K562 (cell line): ENCODE measurements at regions of chr6 and their contacts with region 1.

Region 1: DNA sequence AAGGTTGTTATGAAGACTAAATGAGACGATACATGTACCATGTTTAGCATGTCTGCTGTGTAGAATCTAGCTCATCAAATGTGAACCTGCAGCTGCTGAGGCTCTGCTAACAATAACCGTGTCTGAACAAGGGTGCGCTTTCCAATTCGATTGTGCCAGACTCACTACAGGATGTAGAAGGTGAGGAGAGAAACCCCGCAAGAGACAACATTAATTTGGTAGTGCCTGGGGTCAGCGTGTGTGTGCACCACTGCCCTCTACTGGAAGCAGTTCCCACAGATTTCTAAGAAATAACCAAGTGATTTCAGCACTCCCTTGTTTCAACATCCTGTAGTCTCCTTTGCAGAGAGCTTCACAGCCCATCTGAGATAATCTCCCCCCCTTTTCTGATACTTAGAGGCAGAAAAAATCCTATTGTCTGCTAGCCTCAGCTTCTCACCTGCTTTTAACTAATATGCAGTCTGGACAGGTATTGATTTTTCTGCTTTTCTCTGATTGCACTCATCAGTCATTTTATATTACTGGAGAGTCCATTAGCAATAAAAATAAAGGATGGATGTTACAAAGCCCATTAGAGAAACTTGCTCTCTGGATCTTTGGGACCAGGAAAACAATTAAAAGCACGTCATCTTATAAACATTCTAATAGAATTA is 96.7 kb upstream of the BACH2 start:
- DNase-seq: peak; percentile 44 to 79 (median 50)
- ATAC-seq: peak; percentile 89
- H3K4me3 ChIP-seq: no peak overlapping the region
- H3K27ac ChIP-seq: no peak overlapping the region
- H3K4me1 ChIP-seq: peaks cover 7 to 14% of the 10 kb centered on the region in 2 experiments; a peak in 3 of 5 replicates
- H3K27me3 ChIP-seq: no peaks in the 10 kb centered on the region; a peak in 1 of 5 replicates
- CTCF ChIP-seq: peak; percentile 72 to 80 (median 79)
- EP300 ChIP-seq: no peak
- POLR2A ChIP-seq: no peak
- RAD21 ChIP-seq: peak; percentile 71 to 89

Region 2: DNA sequence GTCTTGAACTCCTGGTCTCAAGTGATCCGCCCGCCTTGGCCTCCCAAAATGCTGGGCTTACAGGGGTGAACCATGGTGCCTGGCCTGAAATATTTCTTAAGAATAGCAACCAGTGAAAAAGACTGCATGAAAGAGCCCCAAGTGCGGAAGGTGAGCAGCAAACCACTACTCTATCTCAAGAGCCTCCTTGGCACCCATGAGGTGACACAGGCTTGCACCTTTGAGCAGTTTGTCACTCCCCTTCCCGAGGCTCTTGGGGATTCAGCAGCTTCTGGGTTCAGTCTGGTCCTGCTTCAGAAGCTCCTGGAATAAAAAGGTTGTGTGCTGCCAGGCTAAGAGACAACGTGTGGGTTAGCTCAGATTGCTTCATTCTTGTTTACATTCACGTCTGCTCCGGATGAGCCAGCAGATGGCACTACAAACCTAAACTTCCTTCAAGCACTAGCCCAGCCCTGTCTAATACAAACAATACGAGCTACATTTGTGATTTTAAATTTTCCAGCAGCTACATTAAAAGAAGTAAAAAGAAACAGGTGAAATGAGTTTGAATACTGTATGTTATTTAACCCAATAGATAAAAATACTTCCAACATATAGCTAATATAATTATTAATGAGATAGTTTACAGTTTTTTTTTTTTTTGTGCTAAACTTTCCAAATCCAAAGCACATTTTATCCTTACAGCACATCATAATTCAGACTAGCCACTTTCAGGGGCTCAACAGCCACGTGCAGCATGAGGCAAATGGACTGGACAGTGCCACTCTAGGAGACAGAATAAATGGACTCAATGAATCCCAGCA is 452.9 kb before region 1 on chr6:
- CTCF ChIA-PET with region 1: interaction called, 10 read pairs
- POLR2A ChIA-PET with region 1: no interaction called
- in situ Hi-C with region 1: no loop called
- intact Hi-C with region 1: loop called (anchors 5 kb)
- DNase-seq: peak; percentile 54 to 79 (median 64)
- ATAC-seq: peak; percentile 99
- H3K4me3 ChIP-seq: no peak overlapping the region
- H3K27ac ChIP-seq: no peak overlapping the region
- H3K4me1 ChIP-seq: no peaks in the 10 kb centered on the region
- H3K27me3 ChIP-seq: peaks cover 0 to 13% of the 10 kb centered on the region in 2 experiments; a peak in 1 of 5 replicates
- CTCF ChIP-seq: peak; percentile 77 to 86 (median 82)
- EP300 ChIP-seq: 0 out of 2 replicates have a peak, but pooled peaks have one; percentile 16
- POLR2A ChIP-seq: no peak
- RAD21 ChIP-seq: peak; percentile 90 to 96

Region 3: GRCh38 chr6:90216072-90216977 is 177.0 kb before region 1 on chr6:
- CTCF ChIA-PET with region 1: no interaction called
- POLR2A ChIA-PET with region 1: no interaction called
- in situ Hi-C with region 1: no loop called
- intact Hi-C with region 1: loop called (anchors 10 kb)
- DNase-seq: no peak
- ATAC-seq: no peak
- H3K4me3 ChIP-seq: no peak overlapping the region
- H3K27ac ChIP-seq: no peak overlapping the region
- H3K4me1 ChIP-seq: peaks cover 4 to 24% of the 10 kb centered on the region in 2 experiments; a peak in 4 of 5 replicates
- H3K27me3 ChIP-seq: no peaks in the 10 kb centered on the region
- CTCF ChIP-seq: no peak
- EP300 ChIP-seq: no peak
- POLR2A ChIP-seq: no peak
- RAD21 ChIP-seq: no peak

Region 4: GRCh38 chr6:90356012-90356421 is 37.3 kb before region 1 on chr6:
- CTCF ChIA-PET with region 1: no interaction called
- POLR2A ChIA-PET with region 1: no interaction called
- in situ Hi-C with region 1: no loop called
- intact Hi-C with region 1: loop called (anchors 2 kb)
- DNase-seq: peak in 2 of 4 experiments; percentile 31 to 33
- ATAC-seq: peak; percentile 68
- H3K4me3 ChIP-seq: no peak overlapping the region
- H3K27ac ChIP-seq: no peak overlapping the region; the same call in 2 of the 3 replicates
- H3K4me1 ChIP-seq: peaks cover 4 to 6% of the 10 kb centered on the region in 2 experiments; a peak in 3 of 5 replicates
- H3K27me3 ChIP-seq: no peaks in the 10 kb centered on the region
- CTCF ChIP-seq: no peak
- EP300 ChIP-seq: no peak
- POLR2A ChIP-seq: no peak
- RAD21 ChIP-seq: no peak

Region 5: GRCh38 chr6:90431576-90431975 is 38.2 kb after region 1 on chr6:
- CTCF ChIA-PET with region 1: no interaction called
- POLR2A ChIA-PET with region 1: no interaction called
- in situ Hi-C with region 1: no loop called
- intact Hi-C with region 1: no loop called
- DNase-seq: no peak
- ATAC-seq: no peak
- H3K4me3 ChIP-seq: no peak overlapping the region
- H3K27ac ChIP-seq: no peak overlapping the region
- H3K4me1 ChIP-seq: no peaks in the 10 kb centered on the region
- H3K27me3 ChIP-seq: no peaks in the 10 kb centered on the region
- CTCF ChIP-seq: no peak
- EP300 ChIP-seq: no peak
- POLR2A ChIP-seq: no peak
- RAD21 ChIP-seq: no peak

Region 6: GRCh38 chr6:90454836-90455427 is 61.6 kb after region 1 on chr6:
- CTCF ChIA-PET with region 1: no interaction called
- POLR2A ChIA-PET with region 1: no interaction called
- in situ Hi-C with region 1: no loop called
- intact Hi-C with region 1: no loop called
- DNase-seq: no peak
- ATAC-seq: no peak
- H3K4me3 ChIP-seq: no peak overlapping the region
- H3K27ac ChIP-seq: no peak overlapping the region
- H3K4me1 ChIP-seq: peaks cover 18 to 36% of the 10 kb centered on the region in 2 experiments
- H3K27me3 ChIP-seq: no peaks in the 10 kb centered on the region
- CTCF ChIP-seq: no peak
- EP300 ChIP-seq: no peak
- POLR2A ChIP-seq: no peak
- RAD21 ChIP-seq: no peak